GM12878 (cell line): ENCODE measurements at regions of chr19 and their contacts with region 1.

Region 1: GRCh38 chr19:45692187-45693105 is at the start of gene QPCTL:
- DNase-seq: peak; percentile 100
- ATAC-seq: peak; percentile 93
- H3K4me3 ChIP-seq: peak within 1 kb of the TSS; percentile 76
- H3K27ac ChIP-seq: peak within 1 kb of the TSS; percentile 82
- H3K4me1 ChIP-seq: peaks cover 10% of the 10 kb centered on the region
- H3K27me3 ChIP-seq: no peaks in the 10 kb centered on the region
- CTCF ChIP-seq: no peak
- EP300 ChIP-seq: peak; percentile 13 to 31; a peak in 1 of 4 replicates
- POLR2A ChIP-seq: peak; percentile 93
- RAD21 ChIP-seq: no peak
- polyA plus RNA-seq, gene QPCTL: 1.1 to 1.7 TPM

Region 2: GRCh38 chr19:45463241-45463640 is 229.2 kb before region 1 on chr19:
- CTCF ChIA-PET with region 1: no interaction called
- POLR2A ChIA-PET with region 1: no interaction called
- RAD21 ChIA-PET with region 1: no interaction called
- SMC1A ChIA-PET with region 1: no interaction called
- in situ Hi-C with region 1: no loop called
- intact Hi-C with region 1: no loop called
- DNase-seq: no peak
- ATAC-seq: no peak
- H3K4me3 ChIP-seq: no peak overlapping the region
- H3K27ac ChIP-seq: no peak overlapping the region
- H3K4me1 ChIP-seq: peaks cover 3% of the 10 kb centered on the region
- H3K27me3 ChIP-seq: no peaks in the 10 kb centered on the region
- CTCF ChIP-seq: no peak
- EP300 ChIP-seq: no peak
- POLR2A ChIP-seq: no peak
- RAD21 ChIP-seq: no peak

Region 3: GRCh38 chr19:45670670-45671453 is 21.6 kb before region 1 on chr19:
- CTCF ChIA-PET with region 1: interaction called, 27 read pairs
- POLR2A ChIA-PET with region 1: interaction called, 54 read pairs
- RAD21 ChIA-PET with region 1: interaction called, 27 read pairs
- SMC1A ChIA-PET with region 1: interaction called, 13 read pairs
- in situ Hi-C with region 1: no loop called
- intact Hi-C with region 1: no loop called
- DNase-seq: peak; percentile 62
- ATAC-seq: peak; percentile 66
- H3K4me3 ChIP-seq: peak overlapping the region; percentile 94
- H3K27ac ChIP-seq: peak overlapping the region; percentile 37; the same call in 1 of the 2 replicates
- H3K4me1 ChIP-seq: peaks cover 9% of the 10 kb centered on the region
- H3K27me3 ChIP-seq: no peaks in the 10 kb centered on the region
- CTCF ChIP-seq: no peak
- EP300 ChIP-seq: no peak
- POLR2A ChIP-seq: no peak
- RAD21 ChIP-seq: no peak

Region 4: DNA sequence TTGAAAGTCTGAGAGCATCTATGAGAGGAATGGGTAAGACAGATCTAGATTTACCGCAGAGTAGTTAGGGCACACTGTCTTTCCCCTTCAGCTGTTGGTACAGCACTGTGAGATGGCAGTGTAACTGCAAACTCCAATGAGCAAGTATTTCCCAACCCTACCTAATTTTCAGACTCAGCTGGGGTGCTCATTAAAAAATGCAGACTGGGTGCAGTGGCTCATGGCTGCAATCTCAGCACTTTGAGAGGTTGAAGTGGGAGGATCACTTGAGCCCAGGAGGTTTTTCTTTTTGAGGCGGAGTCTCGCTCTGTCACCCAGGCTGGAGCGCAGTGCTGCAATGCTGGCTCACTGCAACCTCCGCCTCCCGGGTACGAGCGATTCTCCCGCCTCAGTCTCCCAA is 12.7 kb after region 1 on chr19:
- CTCF ChIA-PET with region 1: interaction called, 73 read pairs
- POLR2A ChIA-PET with region 1: interaction called, 17 read pairs
- RAD21 ChIA-PET with region 1: interaction called, 25 read pairs
- SMC1A ChIA-PET with region 1: interaction called, 31 read pairs
- in situ Hi-C with region 1: no loop called
- intact Hi-C with region 1: no loop called
- DNase-seq: no peak
- ATAC-seq: no peak
- H3K4me3 ChIP-seq: no peak overlapping the region
- H3K27ac ChIP-seq: 0 out of 2 replicates have a peak overlapping the region, but pooled peaks have one; percentile 26
- H3K4me1 ChIP-seq: peaks cover 19% of the 10 kb centered on the region
- H3K27me3 ChIP-seq: no peaks in the 10 kb centered on the region
- CTCF ChIP-seq: no peak
- EP300 ChIP-seq: no peak
- POLR2A ChIP-seq: no peak
- RAD21 ChIP-seq: no peak

Region 5: DNA sequence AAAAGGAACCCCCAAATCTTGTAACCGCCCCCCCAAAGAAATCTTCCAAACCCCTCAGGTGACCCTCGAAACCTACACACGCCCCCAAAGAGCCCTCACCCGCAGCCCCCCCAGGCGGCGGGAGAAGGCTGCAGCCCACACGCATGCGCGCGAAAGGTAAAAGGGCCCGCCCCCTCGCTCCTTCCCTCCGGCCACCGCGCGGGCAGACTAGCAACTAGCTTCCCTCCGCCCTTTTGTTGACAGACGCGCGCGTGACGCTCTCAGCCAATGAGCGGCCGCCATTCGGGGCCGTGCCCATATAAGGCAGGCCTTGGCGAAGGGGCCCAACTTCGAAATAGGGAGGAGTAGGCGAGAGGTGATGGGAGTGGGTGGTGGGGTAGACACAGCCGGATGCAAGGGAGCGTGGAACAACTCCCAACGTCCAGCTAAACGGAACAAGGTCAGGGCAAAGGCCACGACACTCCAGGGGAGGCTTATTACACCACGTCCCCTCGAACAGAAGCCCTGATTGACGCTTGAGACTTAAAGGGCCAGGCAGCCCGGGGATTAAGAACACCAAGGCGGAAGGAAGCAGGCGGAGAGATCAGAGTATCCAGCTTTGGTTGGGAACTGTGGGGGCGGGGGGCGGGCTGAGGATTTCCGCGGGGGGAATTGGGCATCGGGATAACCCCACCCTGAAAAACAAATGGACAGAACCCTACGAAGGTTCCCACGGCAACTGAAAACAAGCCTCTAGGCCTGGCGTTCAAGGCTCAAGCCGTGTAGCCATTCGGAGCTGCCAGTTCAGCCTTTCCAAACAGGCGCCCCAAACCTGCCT is 24.9 kb after region 1 on chr19:
- CTCF ChIA-PET with region 1: interaction called, 53 read pairs
- POLR2A ChIA-PET with region 1: interaction called, 11 read pairs
- RAD21 ChIA-PET with region 1: interaction called, 22 read pairs
- SMC1A ChIA-PET with region 1: interaction called, 23 read pairs
- in situ Hi-C with region 1: no loop called
- intact Hi-C with region 1: no loop called
- DNase-seq: peak; percentile 99
- ATAC-seq: peak; percentile 99
- H3K4me3 ChIP-seq: peak overlapping the region; percentile 95
- H3K27ac ChIP-seq: peak overlapping the region; percentile 97
- H3K4me1 ChIP-seq: peaks cover 13% of the 10 kb centered on the region
- H3K27me3 ChIP-seq: no peaks in the 10 kb centered on the region
- CTCF ChIP-seq: peak; percentile 21 to 31 (median 25); a peak in 4 of 6 replicates
- EP300 ChIP-seq: peak in 1 of 2 experiments; percentile 51; a peak in 2 of 4 replicates
- POLR2A ChIP-seq: peak; percentile 70
- RAD21 ChIP-seq: no peak

Region 6: DNA sequence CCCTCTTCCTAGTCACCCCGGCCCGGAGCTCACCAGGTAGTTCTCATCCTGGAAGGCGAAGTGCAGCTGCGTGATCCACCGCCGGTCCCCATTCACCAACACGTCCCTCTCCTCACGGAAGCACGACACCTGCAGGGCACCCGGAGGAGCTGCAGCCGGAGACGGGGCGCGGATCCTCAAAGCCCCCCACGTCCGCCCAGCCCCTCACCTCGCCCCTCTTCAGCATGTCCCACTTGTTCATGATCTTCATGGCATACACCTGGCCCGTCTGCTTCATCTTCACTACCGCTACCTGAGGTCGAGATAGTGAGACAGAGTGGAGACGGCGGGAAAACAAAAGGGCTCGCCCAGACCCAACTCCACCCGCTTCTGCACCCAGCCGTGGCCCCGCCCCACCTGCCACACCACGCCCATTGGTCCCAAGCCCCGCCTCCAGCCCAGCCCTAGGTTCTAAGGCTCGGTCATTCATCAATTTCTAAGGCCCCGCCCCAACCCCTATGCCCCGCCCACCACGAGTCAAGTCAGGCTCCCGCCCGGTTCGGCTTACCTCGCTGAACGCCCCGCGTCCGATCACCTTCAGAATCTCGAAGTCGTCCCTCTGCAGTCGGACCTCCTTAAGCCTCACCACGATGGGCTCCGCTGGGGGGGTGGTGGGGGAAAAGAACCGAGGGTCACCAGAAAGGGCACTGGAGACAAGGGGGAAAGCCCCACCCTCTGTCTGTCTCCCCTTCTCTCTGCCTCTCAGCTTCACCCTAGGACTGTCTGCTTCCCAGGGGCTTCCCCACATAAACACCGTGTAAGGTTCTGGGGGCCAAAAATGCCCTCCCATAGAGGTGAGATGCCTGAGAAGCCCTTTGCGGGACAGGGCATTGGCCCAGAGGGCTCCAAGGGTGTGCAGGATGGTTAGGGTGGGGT is 87.0 kb after region 1 on chr19:
- CTCF ChIA-PET with region 1: interaction called, 12 read pairs
- POLR2A ChIA-PET with region 1: interaction called, 3 read pairs
- RAD21 ChIA-PET with region 1: interaction called, 7 read pairs
- SMC1A ChIA-PET with region 1: no interaction called
- in situ Hi-C with region 1: no loop called
- intact Hi-C with region 1: no loop called
- DNase-seq: peak; percentile 63
- ATAC-seq: peak; percentile 99
- H3K4me3 ChIP-seq: peak overlapping the region; percentile 60; the same call in 1 of the 2 replicates
- H3K27ac ChIP-seq: no peak overlapping the region
- H3K4me1 ChIP-seq: peaks cover 11% of the 10 kb centered on the region
- H3K27me3 ChIP-seq: no peaks in the 10 kb centered on the region
- CTCF ChIP-seq: peak; percentile 74 to 88 (median 77)
- EP300 ChIP-seq: no peak
- POLR2A ChIP-seq: peak; percentile 67
- RAD21 ChIP-seq: 0 out of 2 replicates have a peak, but pooled peaks have one; percentile 27